ENCODE measurements at regions of chr6 and their contacts with region 1.

Region 1: GRCh38 chr6:75849701-75850563 is 100.9 kb downstream of the MYO6 start:
- DNase-seq: peak; percentile 40 to 50
- H3K4me3 ChIP-seq: no peak overlapping the region
- H3K4me3 Mint-ChIP-seq: peak overlapping the region; percentile 63
- H3K27ac Mint-ChIP-seq: peak overlapping the region; percentile 61
- H3K4me1 ChIP-seq: peaks cover 23% of the 10 kb centered on the region
- H3K4me1 Mint-ChIP-seq: peaks cover 16% of the 10 kb centered on the region
- H3K27me3 ChIP-seq: no peaks in the 10 kb centered on the region
- H3K27me3 Mint-ChIP-seq: no peaks in the 10 kb centered on the region
- CTCF ChIP-seq: no peak

Region 2: GRCh38 chr6:75748743-75749501 is 101.0 kb before region 1 on chr6 and contains the start of gene MYO6:
- CTCF ChIA-PET with region 1: no interaction called
- POLR2A ChIA-PET with region 1: no interaction called
- intact Hi-C with region 1: loop called (anchors 1 kb)
- DNase-seq: peak; percentile 82 to 89
- H3K4me3 ChIP-seq: peak within 1 kb of the TSS; percentile 97
- H3K4me3 Mint-ChIP-seq: peak within 1 kb of the TSS; percentile 89
- H3K27ac Mint-ChIP-seq: peak within 1 kb of the TSS; percentile 85
- H3K4me1 ChIP-seq: peaks cover 24% of the 10 kb centered on the region
- H3K4me1 Mint-ChIP-seq: peaks cover 7% of the 10 kb centered on the region
- H3K27me3 ChIP-seq: no peaks in the 10 kb centered on the region
- H3K27me3 Mint-ChIP-seq: no peaks in the 10 kb centered on the region
- CTCF ChIP-seq: no peak
- total RNA-seq, gene MYO6: 39.9 and 43.0 TPM in 2 replicates